ENCODE measurements at regions of chr12 and their contacts with region 1.

Region 1: GRCh38 chr12:50084775-50085614 is at the start of gene SMARCD1:
- DNase-seq: peak; percentile 81
- ATAC-seq: peak; percentile 89
- H3K4me3 ChIP-seq: peak within 1 kb of the TSS; percentile 70 to 77
- H3K27ac ChIP-seq: peak within 1 kb of the TSS; percentile 59
- H3K4me1 ChIP-seq: peaks cover 5 to 21% of the 10 kb centered on the region in 2 experiments
- H3K27me3 ChIP-seq: no peaks in the 10 kb centered on the region
- CTCF ChIP-seq: peak; percentile 45 to 60 (median 56); a peak in 4 of 6 replicates
- POLR2A ChIP-seq: peak; percentile 50
- RAD21 ChIP-seq: no peak
- total RNA-seq, gene SMARCD1: 64.8 TPM

Region 2: DNA sequence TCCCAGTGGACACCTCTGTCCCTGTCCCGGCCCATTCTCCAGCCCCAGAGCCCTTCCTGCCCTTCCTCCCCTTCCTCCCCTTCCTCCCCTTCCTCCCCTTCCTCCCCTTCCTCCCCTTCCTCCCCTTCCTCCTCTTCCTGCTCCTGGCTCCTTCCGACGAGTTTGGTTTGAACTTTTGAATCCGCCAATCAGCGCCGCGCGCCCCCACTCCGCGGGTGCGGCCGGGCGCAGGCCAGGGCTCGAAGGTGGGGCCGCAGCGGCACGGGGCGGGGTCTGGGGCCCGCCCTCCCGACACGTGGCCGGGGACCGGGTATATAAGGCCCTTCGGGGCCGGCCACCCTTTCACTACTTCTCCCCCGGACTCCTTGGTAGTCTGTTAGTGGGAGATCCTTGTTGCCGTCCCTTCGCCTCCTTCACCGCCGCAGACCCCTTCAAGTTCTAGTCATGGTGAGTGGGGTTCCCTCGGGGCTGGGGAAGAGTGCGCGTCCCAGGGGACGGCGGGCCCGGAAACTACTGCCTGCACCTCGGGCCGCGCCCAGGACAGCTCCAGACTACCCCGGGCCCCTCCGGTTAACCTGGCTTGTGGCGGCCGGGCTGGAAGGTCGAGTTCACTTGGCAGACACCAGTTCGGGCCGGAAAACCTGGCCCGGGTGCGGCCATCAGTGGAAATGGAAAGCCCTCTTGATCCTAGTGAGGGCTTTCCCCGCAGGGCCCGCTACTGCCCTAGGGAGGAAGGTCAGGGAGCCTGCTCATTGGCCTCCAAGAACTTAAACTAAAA is 820.1 kb before region 1 on chr12 and contains the start of gene TUBA1C:
- CTCF ChIA-PET with region 1: no interaction called
- POLR2A ChIA-PET with region 1: no interaction called
- RAD21 ChIA-PET with region 1: no interaction called
- intact Hi-C with region 1: no loop called
- DNase-seq: peak; percentile 94
- ATAC-seq: peak; percentile 85
- H3K4me3 ChIP-seq: peak within 1 kb of the TSS; percentile 88 to 98
- H3K27ac ChIP-seq: peak within 1 kb of the TSS; percentile 99
- H3K4me1 ChIP-seq: peaks cover 23 to 46% of the 10 kb centered on the region in 2 experiments
- H3K27me3 ChIP-seq: no peaks in the 10 kb centered on the region
- CTCF ChIP-seq: no peak
- POLR2A ChIP-seq: peak; percentile 98
- RAD21 ChIP-seq: no peak
- total RNA-seq, gene TUBA1C: 571 TPM

Region 3: GRCh38 chr12:49821373-49822287 is 263.4 kb before region 1 on chr12:
- CTCF ChIA-PET with region 1: no interaction called
- POLR2A ChIA-PET with region 1: no interaction called
- RAD21 ChIA-PET with region 1: no interaction called
- intact Hi-C with region 1: no loop called
- DNase-seq: no peak
- ATAC-seq: no peak
- H3K4me3 ChIP-seq: no peak overlapping the region
- H3K27ac ChIP-seq: no peak overlapping the region
- H3K4me1 ChIP-seq: peaks cover 0 to 5% of the 10 kb centered on the region in 2 experiments; a peak in 1 of 4 replicates
- H3K27me3 ChIP-seq: no peaks in the 10 kb centered on the region
- CTCF ChIP-seq: no peak
- POLR2A ChIP-seq: no peak
- RAD21 ChIP-seq: no peak

Region 4: DNA sequence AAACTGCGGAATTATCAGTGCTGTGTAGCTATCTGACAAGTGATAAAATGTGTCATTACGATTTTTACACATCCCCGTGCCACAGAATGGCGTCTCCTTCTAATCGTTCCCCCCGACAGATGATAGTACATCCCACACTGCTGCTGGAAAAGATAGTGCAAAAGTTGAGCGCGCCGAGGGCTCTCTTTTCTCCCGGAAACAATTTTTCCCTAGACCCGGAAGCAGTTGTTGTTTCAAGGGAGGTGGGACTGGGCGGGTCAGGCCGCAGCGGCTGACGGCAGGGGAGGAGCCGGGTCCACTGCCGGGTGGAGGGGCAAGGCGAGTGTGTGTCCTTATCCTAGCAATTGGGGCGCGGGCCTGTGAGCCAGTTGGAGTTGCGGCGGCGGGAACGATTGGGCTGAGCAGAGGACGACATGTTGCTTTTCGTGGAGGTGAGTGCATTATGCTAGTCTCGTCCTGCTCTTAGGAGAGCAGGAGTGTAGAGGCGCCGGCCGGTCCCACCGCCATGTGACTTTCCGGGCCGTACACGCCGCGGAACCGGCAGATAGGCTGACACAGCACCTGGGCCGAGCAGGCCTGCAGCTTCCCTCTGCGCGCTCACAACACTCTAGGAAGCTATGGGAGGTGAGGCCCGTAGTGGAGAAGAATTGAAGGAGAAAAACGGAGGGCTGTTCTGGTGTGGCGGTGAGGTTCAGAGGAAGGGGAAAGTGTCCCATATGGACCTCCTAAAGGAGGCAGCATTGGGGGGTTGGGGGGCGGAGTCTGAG is 315.8 kb after region 1 on chr12 and contains the start of gene LARP4:
- CTCF ChIA-PET with region 1: no interaction called
- POLR2A ChIA-PET with region 1: no interaction called
- RAD21 ChIA-PET with region 1: no interaction called
- intact Hi-C with region 1: loop called (anchors 10 kb)
- DNase-seq: peak; percentile 93
- ATAC-seq: peak; percentile 94
- H3K4me3 ChIP-seq: peak within 1 kb of the TSS; percentile 97 to 98
- H3K27ac ChIP-seq: peak within 1 kb of the TSS; percentile 91
- H3K4me1 ChIP-seq: peaks cover 17 to 54% of the 10 kb centered on the region in 2 experiments
- H3K27me3 ChIP-seq: no peaks in the 10 kb centered on the region
- CTCF ChIP-seq: no peak
- POLR2A ChIP-seq: peak; percentile 83
- RAD21 ChIP-seq: no peak
- total RNA-seq, gene LARP4: 76.3 TPM

Measured in HCT116 (cell line).